Activated CD4-positive, alpha-beta memory T cell treated with anti-CD3 and anti-CD28 coated beads, Interleukin-2, amount 10 ng/mL, durations not matched to agents 7 days and 5 days (primary cell): ENCODE measurements at regions of chr11 and their contacts with region 1.

Region 1: DNA sequence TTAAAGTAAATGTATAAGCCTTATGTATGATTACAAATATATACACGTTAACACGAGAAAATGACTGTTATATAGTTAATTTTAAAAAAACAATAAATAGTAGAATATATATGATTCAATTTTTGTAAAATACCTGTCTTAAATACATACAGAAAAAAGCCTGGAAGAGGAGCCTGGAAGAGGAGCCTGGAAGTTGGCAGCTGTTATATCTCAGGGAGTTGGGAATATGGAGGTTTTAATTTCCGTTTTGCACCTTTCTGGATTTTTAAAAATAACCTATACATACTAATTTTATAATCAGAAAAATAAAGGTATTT is 111.6 kb downstream of the WT1 start:
- DNase-seq: no peak
- H3K4me3 Mint-ChIP-seq: no peak overlapping the region
- H3K27ac Mint-ChIP-seq: no peak overlapping the region
- H3K4me1 Mint-ChIP-seq: no peaks in the 10 kb centered on the region
- H3K27me3 Mint-ChIP-seq: peaks cover 32% of the 10 kb centered on the region

Region 2: DNA sequence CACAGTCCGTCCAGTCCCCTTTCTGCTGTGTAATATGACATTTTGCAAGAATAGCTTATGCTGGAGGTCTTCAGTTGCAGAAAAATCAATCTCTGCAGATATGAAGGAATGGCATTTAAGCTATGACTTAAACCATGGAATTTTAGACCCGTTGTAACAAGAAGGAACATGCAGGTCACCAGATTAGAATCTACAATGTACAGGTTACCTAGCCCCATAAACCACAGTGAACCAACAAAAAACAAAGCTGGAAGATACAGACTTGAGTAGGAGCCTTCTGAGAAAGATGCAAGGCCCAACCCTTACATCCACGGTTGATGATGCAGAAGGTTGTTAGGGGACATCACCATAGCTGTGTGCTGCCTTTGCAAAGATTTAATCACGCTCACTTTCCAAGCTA is 21.0 kb before region 1 on chr11:
- CTCF ChIA-PET with region 1: interaction called, 16 read pairs
- POLR2A ChIA-PET with region 1: no interaction called
- DNase-seq: no peak
- H3K4me3 Mint-ChIP-seq: no peak overlapping the region
- H3K27ac Mint-ChIP-seq: no peak overlapping the region
- H3K4me1 Mint-ChIP-seq: no peaks in the 10 kb centered on the region
- H3K27me3 Mint-ChIP-seq: no peaks in the 10 kb centered on the region

Region 3: GRCh38 chr11:32312865-32313403 is 10.8 kb before region 1 on chr11:
- CTCF ChIA-PET with region 1: interaction called, 12 read pairs
- POLR2A ChIA-PET with region 1: no interaction called
- DNase-seq: peak; percentile 18
- H3K4me3 Mint-ChIP-seq: no peak overlapping the region
- H3K27ac Mint-ChIP-seq: no peak overlapping the region
- H3K4me1 Mint-ChIP-seq: peaks cover 7% of the 10 kb centered on the region
- H3K27me3 Mint-ChIP-seq: peaks cover 15% of the 10 kb centered on the region